Tibial artery (tissue), 4 donors: ENCODE measurements at regions of chr2 and their contacts with region 1.

Region 1: DNA sequence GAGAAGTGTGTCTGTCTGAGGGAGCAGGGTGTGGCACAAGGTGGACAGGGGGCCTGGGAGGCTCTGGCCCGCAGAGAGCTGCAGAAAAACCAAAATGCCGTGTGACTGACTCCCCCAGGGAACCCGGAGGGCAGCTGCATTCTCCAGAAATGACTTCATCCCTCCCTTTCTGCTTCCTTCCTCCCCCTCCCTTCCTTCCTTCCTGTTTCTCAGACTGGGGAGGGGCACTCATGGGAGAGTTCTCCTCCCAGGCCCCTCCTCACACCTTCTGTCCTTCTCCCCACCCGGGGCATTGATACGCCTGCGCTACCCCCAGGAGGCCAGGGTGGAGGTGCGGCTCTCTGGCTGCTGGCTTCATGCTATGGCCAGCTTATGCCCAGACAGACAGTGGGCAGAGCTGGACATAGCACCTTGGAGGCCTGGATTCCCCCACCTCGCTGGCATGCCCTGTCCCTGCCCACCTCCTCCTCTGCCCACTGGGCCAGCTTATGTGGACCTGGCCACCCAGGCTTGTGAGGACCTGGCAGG is 8.2 kb upstream of the GPR17 start:
- DNase-seq: no peak
- H3K4me3 ChIP-seq: no peak overlapping the region
- H3K27ac ChIP-seq: peak overlapping the region; percentile 72 to 81
- H3K4me1 ChIP-seq: peaks cover 0 to 48% (median 38%) of the 10 kb centered on the region in 4 donors
- H3K27me3 ChIP-seq: no peaks in the 10 kb centered on the region
- CTCF ChIP-seq: no peak

Region 2: DNA sequence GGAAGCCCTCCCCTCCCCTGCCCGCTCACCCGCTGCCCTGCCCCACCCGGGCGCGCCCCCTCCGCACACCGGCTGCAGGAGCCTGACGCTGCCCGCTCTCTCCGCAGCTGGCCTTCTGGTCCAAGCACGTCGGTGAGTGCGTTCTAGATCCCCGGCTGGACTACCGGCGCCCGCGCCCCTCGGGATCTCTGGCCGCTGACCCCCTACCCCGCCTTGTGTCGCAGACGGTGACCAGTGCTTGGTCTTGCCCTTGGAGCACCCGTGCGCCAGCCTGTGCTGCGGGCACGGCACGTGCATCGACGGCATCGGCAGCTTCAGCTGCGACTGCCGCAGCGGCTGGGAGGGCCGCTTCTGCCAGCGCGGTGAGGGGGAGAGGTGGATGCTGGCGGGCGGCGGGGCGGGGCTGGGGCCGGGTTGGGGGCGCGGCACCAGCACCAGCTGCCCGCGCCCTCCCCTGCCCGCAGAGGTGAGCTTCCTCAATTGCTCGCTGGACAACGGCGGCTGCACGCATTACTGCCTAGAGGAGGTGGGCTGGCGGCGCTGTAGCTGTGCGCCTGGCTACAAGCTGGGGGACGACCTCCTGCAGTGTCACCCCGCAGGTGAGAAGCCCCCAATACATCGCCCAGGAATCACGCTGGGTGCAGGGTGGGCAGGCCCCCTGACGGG is 214.8 kb before region 1 on chr2:
- intact Hi-C with region 1: no loop called
- DNase-seq: no peak
- H3K4me3 ChIP-seq: peak overlapping the region; percentile 11 to 13
- H3K27ac ChIP-seq: no peak overlapping the region
- H3K4me1 ChIP-seq: peaks cover 0 to 34% (median 22%) of the 10 kb centered on the region in 4 donors
- H3K27me3 ChIP-seq: peaks cover 2 to 26% of the 10 kb centered on the region in 2 donors
- CTCF ChIP-seq: no peak

Region 3: DNA sequence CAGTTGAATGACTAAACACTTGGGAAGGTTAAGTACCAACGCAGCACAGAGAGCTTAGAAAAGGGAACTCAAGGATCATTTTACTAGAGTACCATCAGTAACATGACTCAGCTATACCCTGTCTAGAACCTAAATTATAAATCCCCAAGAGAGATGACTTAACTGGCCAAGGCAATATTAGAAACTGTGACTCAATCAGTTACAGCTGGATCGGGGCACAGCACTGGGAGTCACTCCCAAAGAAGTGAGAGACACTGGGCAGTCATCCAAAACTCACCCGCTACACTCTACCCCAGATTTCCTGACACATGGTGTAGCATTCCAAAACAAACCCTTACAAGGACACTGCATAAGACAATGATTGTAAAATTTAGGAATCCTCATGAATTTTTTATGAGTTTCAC is 129.2 kb before region 1 on chr2:
- intact Hi-C with region 1: loop called (anchors 5 kb)
- DNase-seq: peak; percentile 81 to 90
- H3K4me3 ChIP-seq: no peak overlapping the region
- H3K27ac ChIP-seq: peak overlapping the region; percentile 25 to 31
- H3K4me1 ChIP-seq: peaks cover 0 to 30% (median 20%) of the 10 kb centered on the region in 4 donors
- H3K27me3 ChIP-seq: no peaks in the 10 kb centered on the region
- CTCF ChIP-seq: no peak

Region 4: GRCh38 chr2:127580167-127581047 is 57.4 kb before region 1 on chr2:
- intact Hi-C with region 1: loop called (anchors 10 kb)
- DNase-seq: peak in 1 of 2 donors; percentile 18
- H3K4me3 ChIP-seq: no peak overlapping the region
- H3K27ac ChIP-seq: no peak overlapping the region
- H3K4me1 ChIP-seq: peaks cover 0 to 18% (median 16%) of the 10 kb centered on the region in 4 donors
- H3K27me3 ChIP-seq: no peaks in the 10 kb centered on the region
- CTCF ChIP-seq: no peak